T-cell (primary cell): ENCODE measurements at regions of chr16 and their contacts with region 1.

Region 1: GRCh38 chr16:50326949-50327402 is 41.8 kb downstream of the BRD7 start:
- DNase-seq: peak; percentile 36 to 87 (median 70)
- ATAC-seq: peak; percentile 82 to 94 (median 87)
- H3K4me3 ChIP-seq: no peak overlapping the region
- H3K4me3 Mint-ChIP-seq: no peak overlapping the region
- H3K27ac ChIP-seq: peak overlapping the region; percentile 75
- H3K27ac Mint-ChIP-seq: peak overlapping the region; percentile 85 to 88
- H3K4me1 ChIP-seq: peaks cover 5 to 18% of the 10 kb centered on the region in 2 experiments
- H3K4me1 Mint-ChIP-seq: peaks cover 43 to 63% (median 62%) of the 10 kb centered on the region in 3 donors
- H3K27me3 ChIP-seq: no peaks in the 10 kb centered on the region
- H3K27me3 Mint-ChIP-seq: no peaks in the 10 kb centered on the region

Region 2: DNA sequence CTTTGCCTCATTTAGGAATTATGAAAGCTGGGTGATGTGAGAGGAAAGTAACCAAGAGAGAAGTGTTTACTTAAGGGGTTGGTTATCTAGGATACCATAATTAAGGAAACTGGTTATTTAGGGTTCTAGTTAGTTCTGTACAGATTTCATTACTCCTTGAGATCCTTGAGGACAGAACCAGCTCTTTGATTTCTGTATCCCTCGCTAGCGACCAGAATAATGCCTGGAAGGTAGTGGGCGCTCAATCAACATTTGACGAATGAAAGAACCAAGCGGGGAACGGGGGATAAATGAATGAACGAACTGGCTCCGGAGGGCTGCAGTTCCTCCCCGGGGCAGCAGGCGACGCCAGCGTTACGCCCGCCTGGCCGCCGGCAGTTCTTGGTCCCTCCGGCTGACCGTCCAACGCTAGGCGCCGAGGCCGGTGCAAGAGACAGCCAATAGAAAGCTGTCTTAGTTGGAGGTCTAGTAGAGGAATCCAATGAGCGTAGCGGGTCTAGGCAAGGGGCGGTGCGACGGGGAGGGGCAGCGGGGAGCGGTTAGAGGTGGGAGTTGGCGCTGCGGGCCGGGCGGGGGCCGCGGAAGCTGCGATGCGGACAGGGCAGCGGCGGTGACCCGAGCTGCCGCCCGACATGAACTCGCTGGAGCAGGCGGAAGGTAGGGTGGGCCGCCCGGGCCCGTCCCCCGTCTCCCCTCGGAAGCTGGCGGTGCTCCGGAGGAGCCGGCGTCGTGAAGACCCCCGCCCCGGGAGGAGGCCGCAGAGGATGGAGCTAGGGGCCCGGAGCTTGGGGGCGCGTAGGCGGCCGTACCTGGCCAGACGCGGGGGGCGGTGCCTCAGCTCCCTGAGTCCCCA is 302.1 kb before region 1 on chr16 and contains the start of gene CNEP1R1:
- CTCF ChIA-PET with region 1: interaction called in 1 of 2 experiments, 12 read pairs
- POLR2A ChIA-PET with region 1: no interaction called
- DNase-seq: peak; percentile 76 to 96 (median 87)
- ATAC-seq: peak; percentile 94 to 97 (median 96)
- H3K4me3 ChIP-seq: peak within 1 kb of the TSS; percentile 75 to 80
- H3K4me3 Mint-ChIP-seq: peak within 1 kb of the TSS; percentile 92 to 94 (median 93)
- H3K27ac ChIP-seq: peak within 1 kb of the TSS; percentile 56
- H3K27ac Mint-ChIP-seq: peak within 1 kb of the TSS; percentile 87 to 90
- H3K4me1 ChIP-seq: peaks cover 8 to 18% of the 10 kb centered on the region in 2 experiments
- H3K4me1 Mint-ChIP-seq: peaks cover 26 to 35% (median 34%) of the 10 kb centered on the region in 3 donors
- H3K27me3 ChIP-seq: peaks cover 0 to under 1% of the 10 kb centered on the region in 2 experiments
- H3K27me3 Mint-ChIP-seq: no peaks in the 10 kb centered on the region
- total RNA-seq, gene CNEP1R1: 26.7 to 32.9 (median 27.5) TPM

Region 3: DNA sequence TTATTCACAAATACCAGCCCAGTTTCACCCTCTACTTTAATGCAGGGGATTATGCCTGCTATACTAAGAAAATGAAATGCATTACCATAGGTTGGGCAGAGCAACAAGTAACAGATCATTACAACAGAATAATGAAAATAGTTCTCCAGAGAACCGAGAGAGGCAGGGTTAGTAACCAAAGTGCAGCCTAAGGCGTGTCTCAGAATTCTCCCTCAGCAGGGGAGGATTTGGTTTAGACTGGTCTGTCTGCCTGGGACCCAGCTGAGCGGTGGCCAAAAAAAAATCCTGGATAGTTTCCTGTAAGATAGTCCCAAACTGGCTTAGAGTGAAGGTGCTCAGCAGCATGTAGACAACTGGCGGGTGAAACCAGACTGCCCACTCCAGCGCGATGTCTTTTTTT is 91.4 kb before region 1 on chr16:
- CTCF ChIA-PET with region 1: no interaction called
- POLR2A ChIA-PET with region 1: no interaction called
- DNase-seq: no peak
- ATAC-seq: no peak
- H3K4me3 ChIP-seq: no peak overlapping the region
- H3K4me3 Mint-ChIP-seq: no peak overlapping the region
- H3K27ac ChIP-seq: no peak overlapping the region
- H3K27ac Mint-ChIP-seq: no peak overlapping the region
- H3K4me1 ChIP-seq: no peaks in the 10 kb centered on the region
- H3K4me1 Mint-ChIP-seq: no peaks in the 10 kb centered on the region
- H3K27me3 ChIP-seq: no peaks in the 10 kb centered on the region
- H3K27me3 Mint-ChIP-seq: no peaks in the 10 kb centered on the region

Region 4: DNA sequence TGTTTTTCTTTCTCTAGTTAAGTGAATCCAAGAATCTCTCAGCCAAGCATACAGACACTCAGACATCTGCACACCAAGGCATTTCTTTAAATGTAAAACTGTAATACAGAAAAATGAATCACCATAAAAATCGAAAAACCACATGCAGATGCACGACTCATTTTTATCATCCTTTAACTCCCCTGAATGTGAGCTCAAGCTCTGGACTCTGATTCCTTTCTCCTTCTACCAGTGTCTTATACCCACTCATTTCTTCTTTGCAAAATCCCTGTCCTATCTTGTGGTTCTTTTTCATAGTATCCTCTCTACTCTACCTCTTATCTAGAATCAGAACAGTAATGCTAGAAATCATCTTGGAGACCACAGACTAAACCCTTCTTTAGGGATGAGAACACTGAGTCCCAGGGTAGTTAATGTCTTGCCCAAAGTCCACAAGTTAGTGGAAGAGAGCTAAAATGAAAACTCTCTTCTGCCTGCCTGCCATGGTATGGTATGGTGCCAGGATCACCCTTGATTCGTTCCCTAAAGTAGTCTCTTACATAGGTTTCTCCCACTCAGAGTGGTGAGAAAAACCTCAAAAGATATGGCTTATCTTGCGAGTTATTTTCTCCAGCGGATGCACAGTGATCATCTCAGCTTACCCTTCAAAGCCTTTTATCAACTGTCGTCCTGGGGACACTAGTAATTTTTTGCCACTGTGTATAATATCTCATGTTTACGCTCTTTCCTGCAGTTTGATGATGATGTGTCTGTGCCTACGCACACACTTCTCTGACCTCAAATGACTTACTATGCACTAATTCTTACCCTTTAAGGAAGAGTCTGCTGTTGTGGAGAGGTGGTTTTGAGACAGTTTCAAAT is 11.6 kb after region 1 on chr16:
- CTCF ChIA-PET with region 1: interaction called in 1 of 2 experiments, 37 read pairs
- POLR2A ChIA-PET with region 1: interaction called, 3 to 16 read pairs
- DNase-seq: peak in 16 of 35 experiments; percentile 12 to 77 (median 47)
- ATAC-seq: peak; percentile 29 to 78 (median 68)
- H3K4me3 ChIP-seq: no peak overlapping the region
- H3K4me3 Mint-ChIP-seq: peak overlapping the region; percentile 14 to 63 (median 21)
- H3K27ac ChIP-seq: peak overlapping the region; percentile 94
- H3K27ac Mint-ChIP-seq: peak overlapping the region; percentile 71 to 90
- H3K4me1 ChIP-seq: peaks cover 0 to 22% of the 10 kb centered on the region in 2 experiments
- H3K4me1 Mint-ChIP-seq: peaks cover 26 to 70% (median 47%) of the 10 kb centered on the region in 3 donors
- H3K27me3 ChIP-seq: no peaks in the 10 kb centered on the region
- H3K27me3 Mint-ChIP-seq: no peaks in the 10 kb centered on the region

Region 5: DNA sequence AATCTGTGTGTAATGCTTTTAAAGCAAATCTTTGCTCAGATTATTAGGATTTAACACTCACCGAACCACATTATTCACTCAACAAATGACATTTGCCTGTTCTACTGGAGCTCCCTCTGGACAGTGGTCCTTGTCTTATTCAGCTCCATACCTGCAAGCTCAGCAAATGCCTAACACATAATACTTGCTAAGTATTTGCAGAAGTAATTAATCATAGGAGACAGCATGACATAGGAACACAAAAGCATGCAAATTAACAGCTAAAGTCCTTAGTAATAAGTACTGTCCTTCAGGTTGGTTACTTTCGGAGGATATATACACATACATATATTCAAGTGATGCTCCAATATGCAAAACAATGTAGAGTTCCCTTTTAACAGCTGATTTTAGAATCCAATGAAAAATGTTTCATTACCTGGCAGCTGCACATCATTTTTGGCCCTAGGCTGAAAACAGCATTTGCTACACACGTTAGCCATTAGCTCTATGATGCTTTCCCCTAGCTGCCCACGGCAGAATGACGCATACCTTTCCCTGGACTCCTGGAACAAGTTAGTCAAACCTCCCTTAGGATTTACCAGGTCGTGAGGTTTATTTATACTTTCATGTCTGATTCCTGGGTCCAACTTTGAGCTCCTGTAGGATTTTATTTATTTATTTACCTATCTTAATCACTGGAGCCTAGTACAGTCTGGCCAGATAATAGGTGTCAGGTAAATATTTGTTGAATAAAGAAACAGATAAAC is 33.2 kb after region 1 on chr16:
- CTCF ChIA-PET with region 1: interaction called, 18 to 250 read pairs
- POLR2A ChIA-PET with region 1: interaction called, 3 to 18 read pairs
- DNase-seq: no peak
- ATAC-seq: no peak
- H3K4me3 ChIP-seq: no peak overlapping the region
- H3K4me3 Mint-ChIP-seq: no peak overlapping the region
- H3K27ac ChIP-seq: peak overlapping the region; percentile 13
- H3K27ac Mint-ChIP-seq: peak overlapping the region; percentile 32 to 45
- H3K4me1 ChIP-seq: peaks cover 0 to 6% of the 10 kb centered on the region in 2 experiments
- H3K4me1 Mint-ChIP-seq: peaks cover 59 to 75% (median 60%) of the 10 kb centered on the region in 3 donors
- H3K27me3 ChIP-seq: no peaks in the 10 kb centered on the region
- H3K27me3 Mint-ChIP-seq: no peaks in the 10 kb centered on the region

Region 6: DNA sequence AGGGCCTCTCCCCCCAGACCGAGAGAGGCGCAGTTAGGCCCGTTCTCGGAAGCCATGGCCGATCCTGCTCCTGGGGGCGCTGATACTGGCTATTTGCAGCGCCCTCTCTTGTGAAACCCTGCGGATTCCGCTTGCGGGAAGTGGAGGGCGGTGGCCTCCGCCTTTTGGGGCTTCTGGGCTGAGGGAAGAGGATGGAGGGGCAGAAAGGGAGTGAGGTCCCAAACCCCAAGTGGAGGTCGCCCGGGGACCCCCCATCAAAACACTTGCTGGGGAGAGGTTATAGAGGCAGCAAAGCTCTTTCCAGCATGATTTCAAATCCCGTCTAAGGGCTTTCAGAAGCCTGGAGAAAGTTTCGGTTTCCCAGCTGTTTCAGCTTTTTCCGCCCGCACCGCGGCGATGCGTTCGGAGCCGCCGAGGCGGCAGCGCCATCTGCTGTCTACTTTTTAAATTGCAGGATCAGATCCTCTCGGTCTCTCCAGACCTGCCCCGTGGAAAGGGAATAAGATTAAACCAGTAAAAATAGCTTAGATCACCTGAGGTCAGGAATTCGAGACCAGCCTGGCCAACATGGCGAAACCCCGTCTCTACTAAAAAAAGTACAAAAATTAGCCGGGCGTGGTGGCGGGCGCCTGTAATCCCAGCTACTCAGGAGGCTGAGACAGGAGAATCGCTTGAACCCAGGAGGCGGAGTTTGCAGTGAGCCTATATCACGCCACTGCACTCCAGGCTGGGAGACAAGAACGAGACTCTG is 338.3 kb after region 1 on chr16:
- CTCF ChIA-PET with region 1: interaction called, 5 to 11 read pairs
- POLR2A ChIA-PET with region 1: no interaction called
- DNase-seq: peak; percentile 39 to 89 (median 76)
- ATAC-seq: peak; percentile 53 to 73 (median 60)
- H3K4me3 ChIP-seq: peak overlapping the region; percentile 51 to 59
- H3K4me3 Mint-ChIP-seq: peak overlapping the region; percentile 72 to 75 (median 73)
- H3K27ac ChIP-seq: no peak overlapping the region
- H3K27ac Mint-ChIP-seq: peak overlapping the region; percentile 81 to 85
- H3K4me1 ChIP-seq: peaks cover 6 to 38% of the 10 kb centered on the region in 2 experiments
- H3K4me1 Mint-ChIP-seq: peaks cover 37 to 44% (median 41%) of the 10 kb centered on the region in 3 donors
- H3K27me3 ChIP-seq: no peaks in the 10 kb centered on the region
- H3K27me3 Mint-ChIP-seq: no peaks in the 10 kb centered on the region

Region 7: GRCh38 chr16:50887500-50888298 is 560.7 kb after region 1 on chr16:
- CTCF ChIA-PET with region 1: no interaction called
- POLR2A ChIA-PET with region 1: no interaction called
- DNase-seq: no peak
- ATAC-seq: no peak
- H3K4me3 ChIP-seq: no peak overlapping the region
- H3K4me3 Mint-ChIP-seq: no peak overlapping the region
- H3K27ac ChIP-seq: no peak overlapping the region
- H3K27ac Mint-ChIP-seq: no peak overlapping the region
- H3K4me1 ChIP-seq: no peaks in the 10 kb centered on the region
- H3K4me1 Mint-ChIP-seq: no peaks in the 10 kb centered on the region
- H3K27me3 ChIP-seq: peaks cover 0 to 13% of the 10 kb centered on the region in 2 experiments
- H3K27me3 Mint-ChIP-seq: peaks cover 27 to 33% of the 10 kb centered on the region in 2 donors